GM10248 (cell line): ENCODE measurements at regions of chr21 and their contacts with region 1.

Region 1: GRCh38 chr21:34510148-34511142 is 1.6 kb downstream of the KCNE1 start:
- DNase-seq: peak; percentile 83
- CTCF ChIP-seq: peak; percentile 89

Region 2: DNA sequence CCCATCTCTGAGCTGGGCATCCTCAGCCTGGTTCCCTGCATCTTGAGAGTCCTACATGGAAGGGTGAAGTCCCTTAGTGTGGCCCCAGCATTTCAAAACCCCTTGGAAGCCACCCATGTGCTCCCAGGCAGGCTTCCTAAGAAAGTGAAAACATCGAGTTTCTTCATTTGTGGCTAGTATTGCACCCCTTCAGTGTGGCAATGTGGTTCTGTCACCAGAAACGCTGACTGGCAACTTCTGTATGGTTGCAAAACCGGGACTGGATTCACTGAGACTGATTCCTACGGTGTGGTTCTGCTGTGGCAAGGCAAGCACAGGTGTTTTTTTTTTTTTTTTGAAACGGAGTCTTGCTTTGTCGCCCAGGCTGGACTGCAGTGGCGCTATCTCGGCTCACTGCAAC is 1116.2 kb before region 1 on chr21:
- CTCF ChIA-PET with region 1: no interaction called
- POLR2A ChIA-PET with region 1: no interaction called
- DNase-seq: no peak
- CTCF ChIP-seq: no peak

Region 3: GRCh38 chr21:34498623-34499022 is 11.8 kb before region 1 on chr21:
- CTCF ChIA-PET with region 1: interaction called, 15 read pairs
- POLR2A ChIA-PET with region 1: no interaction called
- DNase-seq: no peak
- CTCF ChIP-seq: no peak

Region 4: GRCh38 chr21:34526618-34527290 is 16.3 kb after region 1 on chr21:
- CTCF ChIA-PET with region 1: interaction called, 21 read pairs
- POLR2A ChIA-PET with region 1: interaction called, 3 read pairs
- DNase-seq: peak; percentile 48
- CTCF ChIP-seq: no peak

Region 5: GRCh38 chr21:34545079-34545884 is 34.8 kb after region 1 on chr21:
- CTCF ChIA-PET with region 1: interaction called, 10 read pairs
- POLR2A ChIA-PET with region 1: no interaction called
- DNase-seq: peak; percentile 80
- CTCF ChIP-seq: no peak

Region 6: DNA sequence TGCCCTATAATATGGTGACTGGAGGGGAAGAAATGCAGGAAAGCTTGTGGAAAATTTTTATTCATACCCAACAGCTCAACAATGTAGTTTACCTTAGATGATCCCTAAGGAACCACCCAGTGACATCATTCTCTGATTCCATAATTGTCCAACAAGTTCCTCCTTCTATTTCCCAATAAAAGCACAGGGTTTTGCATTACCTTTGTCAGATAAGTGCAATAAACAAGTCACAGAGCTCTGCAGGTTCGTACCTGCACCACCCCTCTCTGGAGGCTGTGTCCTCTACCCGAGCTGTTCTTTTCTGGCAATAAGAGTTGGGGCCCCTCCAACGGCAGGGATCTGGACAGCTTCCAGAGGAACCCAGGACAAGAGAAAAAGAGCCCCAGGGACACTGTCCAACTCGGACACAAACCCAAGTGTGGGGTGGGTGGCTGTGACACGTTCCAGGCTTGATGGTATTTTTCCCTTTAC is 65.6 kb after region 1 on chr21:
- CTCF ChIA-PET with region 1: interaction called, 16 read pairs
- POLR2A ChIA-PET with region 1: no interaction called
- DNase-seq: no peak
- CTCF ChIP-seq: no peak

Region 7: GRCh38 chr21:34582506-34583150 is 72.2 kb after region 1 on chr21:
- CTCF ChIA-PET with region 1: interaction called, 21 read pairs
- POLR2A ChIA-PET with region 1: no interaction called
- DNase-seq: peak; percentile 64
- CTCF ChIP-seq: peak; percentile 33

Region 8: GRCh38 chr21:34630536-34631143 is 120.2 kb after region 1 on chr21:
- CTCF ChIA-PET with region 1: interaction called, 48 read pairs
- POLR2A ChIA-PET with region 1: no interaction called
- DNase-seq: peak; percentile 70
- CTCF ChIP-seq: peak; percentile 72